ENCODE measurements at regions of chr1 and their contacts with region 1.

Region 1: DNA sequence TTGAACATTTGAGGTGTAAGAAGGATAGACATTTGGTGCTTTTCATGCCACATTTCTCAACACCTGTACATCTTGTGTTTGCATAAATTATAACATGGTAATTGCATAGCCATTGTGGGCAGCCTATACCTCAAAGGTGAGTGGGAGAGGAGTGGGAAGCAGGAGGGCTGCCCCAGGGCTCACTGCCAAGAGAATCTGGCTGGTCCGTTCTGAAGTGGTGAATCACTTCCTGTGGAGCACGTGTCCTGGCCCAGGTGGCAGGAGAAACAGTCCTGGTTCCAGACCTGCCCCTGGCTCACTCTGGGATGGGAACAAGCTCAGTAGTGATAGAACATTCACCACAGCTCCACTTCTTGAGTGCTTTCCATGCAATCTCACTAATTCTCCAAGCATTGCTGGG is 11.6 kb upstream of the OLFML2B start:
- DNase-seq: no peak
- ATAC-seq: no peak

Region 2: GRCh38 chr1:161792740-161793139 is 242.5 kb before region 1 on chr1:
- intact Hi-C with region 1: loop called in 1 of 2 experiments (anchors 2 kb)
- DNase-seq: no peak
- ATAC-seq: peak; percentile 67

Region 3: GRCh38 chr1:161864577-161864976 is 170.7 kb before region 1 on chr1:
- intact Hi-C with region 1: loop called in 1 of 2 experiments (anchors 10 kb)
- DNase-seq: no peak
- ATAC-seq: no peak

Measured in left colon (tissue), 2 donors.